Activated T-helper 2 cell treated with anti-CD3 and anti-CD28 coated beads, Interferon-gamma antibody, Interleukin-2, Interleukin-4, amounts not matched to agents 10 μg/mL and 5 μg/mL and 100 μg/mL, durations not matched to agents 14 hours and 24 hours and 36 hours (primary cell): ENCODE measurements at regions of chr18 and their contacts with region 1.

Region 1: GRCh38 chr18:35497370-35498197 is at the start of gene INO80C:
- DNase-seq: peak; percentile 90
- H3K4me3 Mint-ChIP-seq: peak within 1 kb of the TSS; percentile 96
- H3K27ac Mint-ChIP-seq: peak within 1 kb of the TSS; percentile 99
- H3K4me1 Mint-ChIP-seq: peaks cover 35% of the 10 kb centered on the region
- H3K27me3 Mint-ChIP-seq: no peaks in the 10 kb centered on the region
- total RNA-seq, gene INO80C: 34.9 and 35.9 TPM in 2 replicates

Region 2: DNA sequence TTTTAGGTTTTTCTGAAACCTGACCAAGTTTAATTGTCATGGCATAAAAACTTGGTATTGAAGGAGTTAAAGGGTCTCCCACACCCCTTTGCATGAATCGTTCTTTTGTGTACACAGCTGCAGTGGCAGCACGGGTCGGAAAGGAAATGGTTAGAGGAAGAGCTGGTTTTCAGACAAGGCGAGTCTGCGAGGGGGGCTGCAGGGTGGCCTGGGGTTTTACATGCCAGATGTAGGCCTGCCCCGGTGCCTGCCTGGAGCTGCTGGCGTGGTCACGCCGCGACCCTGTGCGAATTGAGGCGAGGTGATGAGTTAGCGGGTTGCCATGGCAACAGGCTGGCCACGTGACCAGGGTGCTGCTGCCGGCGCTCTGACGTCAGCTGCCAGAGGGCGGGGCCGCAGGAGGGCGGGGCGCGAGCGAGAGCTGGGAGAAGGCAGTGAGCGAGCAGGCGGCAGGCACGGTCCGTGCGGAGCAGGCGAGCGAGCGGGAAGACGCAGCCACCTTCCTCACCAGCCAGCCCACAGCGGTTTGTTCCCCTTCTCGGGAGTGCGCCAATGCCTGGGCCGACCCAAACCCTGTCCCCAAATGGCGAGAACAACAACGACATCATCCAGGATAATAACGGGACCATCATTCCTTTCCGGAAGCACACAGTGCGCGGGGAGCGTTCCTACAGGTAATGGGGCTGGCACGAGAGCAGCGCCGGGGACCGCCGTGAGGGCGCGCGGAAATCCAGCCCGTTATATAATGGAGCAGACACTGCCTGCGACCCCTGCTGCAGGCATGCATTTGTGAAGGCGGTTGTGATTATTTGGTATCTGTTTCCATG is 456.4 kb before region 1 on chr18 and contains the start of gene MAPRE2:
- intact Hi-C with region 1: loop called (anchors 5 kb)
- DNase-seq: peak; percentile 98
- H3K4me3 Mint-ChIP-seq: peak within 1 kb of the TSS; percentile 95
- H3K27ac Mint-ChIP-seq: peak within 1 kb of the TSS; percentile 99
- H3K4me1 Mint-ChIP-seq: peaks cover 51% of the 10 kb centered on the region
- H3K27me3 Mint-ChIP-seq: no peaks in the 10 kb centered on the region
- total RNA-seq, gene MAPRE2: 42.7 and 44.6 TPM in 2 replicates

Region 3: DNA sequence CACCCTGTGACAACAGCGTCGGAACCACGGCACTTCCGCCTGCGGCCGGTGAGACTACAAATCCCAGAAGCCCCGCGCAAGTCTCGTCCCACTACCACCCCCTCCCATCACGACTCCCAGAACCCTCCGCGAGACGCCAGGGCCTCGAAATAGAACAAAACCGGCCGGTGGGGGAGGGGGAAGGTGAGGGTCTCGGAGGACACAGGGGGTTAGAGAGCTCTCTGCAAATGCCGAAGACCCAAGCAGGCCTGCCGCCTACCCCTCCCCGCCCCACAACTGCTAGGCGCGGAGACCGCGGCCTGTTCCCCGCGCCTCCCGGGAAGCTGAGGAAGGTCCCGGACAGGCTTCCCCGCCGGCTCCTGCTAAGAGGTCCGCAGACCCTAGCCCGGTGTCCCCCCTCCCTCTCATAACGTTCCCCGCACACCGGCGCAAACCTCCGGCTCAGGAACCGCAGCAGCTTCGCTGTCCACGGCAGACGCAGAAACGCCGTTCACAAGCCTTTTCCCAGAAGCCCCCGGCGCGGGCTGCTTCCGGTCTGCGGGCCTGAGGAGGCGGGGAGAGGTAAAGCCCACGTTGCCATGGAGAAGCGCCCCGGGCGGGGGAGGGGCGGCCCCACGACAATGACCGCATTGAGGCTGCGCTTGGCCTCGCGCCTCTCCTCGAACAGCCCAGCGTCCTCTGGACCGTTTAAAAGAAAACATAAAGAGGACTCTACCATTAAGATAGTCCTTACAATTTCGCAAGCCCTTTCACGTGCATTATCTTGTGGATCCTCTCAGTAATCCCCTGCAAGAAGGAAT is 153.4 kb before region 1 on chr18 and contains the start of gene ZNF24:
- intact Hi-C with region 1: loop called (anchors 1 kb)
- DNase-seq: peak; percentile 87
- H3K4me3 Mint-ChIP-seq: peak within 1 kb of the TSS; percentile 94
- H3K27ac Mint-ChIP-seq: peak within 1 kb of the TSS; percentile 83
- H3K4me1 Mint-ChIP-seq: peaks cover 24% of the 10 kb centered on the region
- H3K27me3 Mint-ChIP-seq: no peaks in the 10 kb centered on the region
- total RNA-seq, gene ZNF24: 46.0 and 51.5 TPM in 2 replicates

Region 4: GRCh38 chr18:35484034-35484433 is 13.6 kb before region 1 on chr18:
- intact Hi-C with region 1: loop called (anchors 1 kb)
- DNase-seq: no peak
- H3K4me3 Mint-ChIP-seq: no peak overlapping the region
- H3K27ac Mint-ChIP-seq: no peak overlapping the region
- H3K4me1 Mint-ChIP-seq: peaks cover 14% of the 10 kb centered on the region
- H3K27me3 Mint-ChIP-seq: no peaks in the 10 kb centered on the region

Region 5: DNA sequence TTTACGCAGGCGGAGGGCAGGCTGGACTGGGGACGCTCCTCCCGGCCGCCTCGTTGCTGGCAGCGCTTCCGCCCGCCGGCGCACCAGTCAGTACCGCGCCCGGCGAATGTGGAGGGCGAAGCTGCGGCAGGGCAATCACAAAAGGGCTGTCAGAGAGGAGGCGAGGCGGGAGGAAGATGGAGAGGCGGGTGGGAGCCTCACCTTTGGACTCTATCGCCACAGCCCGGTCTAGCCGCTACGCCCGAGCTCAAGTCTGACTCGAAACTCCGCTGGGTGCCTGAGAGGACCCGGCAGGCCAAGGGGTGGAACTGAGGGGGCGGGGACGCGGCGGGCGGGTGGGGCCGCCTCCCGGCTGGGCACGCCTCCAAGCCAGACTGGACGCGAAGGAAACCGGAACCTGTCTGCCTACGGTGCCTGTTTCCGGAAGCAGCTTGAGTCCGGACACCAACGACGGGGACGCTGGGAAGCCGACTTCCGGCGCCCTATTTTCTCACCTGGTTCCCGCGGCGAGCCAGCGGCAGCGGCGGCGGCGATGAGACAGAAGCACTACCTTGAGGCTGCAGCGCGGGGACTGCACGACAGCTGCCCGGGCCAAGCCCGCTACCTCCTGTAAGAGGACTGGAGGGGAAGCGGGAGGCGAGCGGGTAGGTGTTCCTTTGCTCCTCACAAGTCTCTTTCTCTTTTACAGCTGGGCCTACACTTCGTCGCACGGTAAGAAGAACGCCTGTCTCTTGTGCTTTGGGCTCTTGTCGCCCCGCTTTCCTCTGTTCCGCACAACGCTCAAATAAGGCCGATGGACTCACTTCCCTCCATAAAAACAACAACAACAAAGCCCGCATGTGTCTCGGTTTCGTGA is 474.8 kb after region 1 on chr18 and contains the start of gene RMP24:
- intact Hi-C with region 1: loop called (anchors 2 kb)
- DNase-seq: peak; percentile 90
- H3K4me3 Mint-ChIP-seq: peak within 1 kb of the TSS; percentile 96
- H3K27ac Mint-ChIP-seq: peak within 1 kb of the TSS; percentile 94
- H3K4me1 Mint-ChIP-seq: peaks cover 39% of the 10 kb centered on the region
- H3K27me3 Mint-ChIP-seq: no peaks in the 10 kb centered on the region